Activated CD4-positive, alpha-beta memory T cell treated with anti-CD3 and anti-CD28 coated beads for 36 hours (primary cell): ENCODE measurements at regions of chr2 and their contacts with region 1.

Region 1: DNA sequence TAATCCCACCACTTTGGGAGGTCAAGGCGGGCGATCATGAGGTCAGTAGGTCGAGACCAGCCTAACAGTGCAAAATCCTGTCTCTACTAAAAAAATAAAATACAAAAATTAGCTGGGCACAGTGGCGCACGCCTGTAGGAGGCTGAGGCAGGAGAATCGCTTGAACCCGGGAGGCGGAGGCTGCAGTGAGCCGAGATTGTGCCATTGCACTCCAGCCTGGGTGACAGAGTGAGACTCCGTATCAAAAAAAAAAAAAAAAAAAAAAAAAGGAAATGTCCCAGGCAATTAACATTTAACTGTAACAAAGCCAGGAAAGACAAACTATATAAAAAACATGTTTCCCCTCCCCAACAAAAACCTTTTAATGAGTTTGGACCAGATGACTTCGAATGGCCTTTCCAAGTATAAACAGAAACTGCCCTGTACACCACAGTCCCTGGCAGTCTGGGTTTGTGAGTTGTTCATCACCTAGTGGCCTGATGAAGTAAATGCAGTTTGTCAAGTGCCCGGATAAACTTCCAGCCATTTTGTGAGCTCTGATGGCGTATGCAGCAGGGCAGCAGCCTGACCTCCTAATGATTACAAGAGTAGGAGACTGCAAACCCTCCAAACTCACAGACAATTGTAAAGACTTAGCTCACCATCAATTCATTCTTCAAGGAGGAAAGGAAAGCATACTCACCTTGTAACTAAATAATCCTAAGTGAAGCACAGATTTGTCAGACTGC is 16.6 kb upstream of the PCBP1 start:
- DNase-seq: peak; percentile 72
- H3K4me3 Mint-ChIP-seq: peak overlapping the region; percentile 35
- H3K27ac Mint-ChIP-seq: peak overlapping the region; percentile 98
- H3K4me1 Mint-ChIP-seq: peaks cover 46% of the 10 kb centered on the region
- H3K27me3 Mint-ChIP-seq: no peaks in the 10 kb centered on the region

Region 2: DNA sequence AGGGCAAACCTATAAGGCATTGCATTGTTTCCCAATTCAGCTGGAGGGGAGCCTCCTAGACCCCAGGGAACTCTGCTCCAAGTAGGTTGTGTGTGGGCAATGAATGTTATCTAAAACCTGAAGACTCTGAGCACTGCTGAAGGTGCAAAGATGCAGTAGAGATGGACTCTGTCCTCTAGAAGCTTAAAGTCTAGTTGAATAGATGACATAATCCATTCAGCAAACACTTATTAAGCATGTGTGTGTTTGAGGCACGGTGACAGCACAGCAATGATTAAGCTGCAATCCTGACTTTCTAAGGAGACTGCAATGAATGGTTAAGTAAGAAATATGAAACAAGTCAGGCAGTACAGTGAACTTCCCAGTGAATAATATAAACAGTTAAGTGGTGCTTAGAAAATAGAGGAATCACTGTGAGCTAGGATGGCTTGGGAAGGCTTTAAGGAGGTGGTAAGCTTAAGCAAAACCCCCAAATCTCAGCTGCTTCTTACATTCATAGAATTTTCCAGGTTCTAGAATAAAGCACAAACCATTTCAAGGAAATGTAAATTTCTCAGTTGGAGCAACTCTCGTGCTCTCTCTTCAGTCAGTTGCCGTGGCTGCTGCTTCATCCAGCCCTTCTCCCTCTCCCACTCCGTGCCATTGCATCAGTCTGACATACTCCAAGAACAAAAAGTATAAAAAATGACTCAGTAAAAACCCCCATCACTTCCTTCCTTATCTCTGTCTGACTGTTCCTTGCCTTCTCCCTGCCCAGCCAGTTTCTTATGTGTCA is 136.7 kb before region 1 on chr2:
- CTCF ChIA-PET with region 1: interaction called, 11 read pairs
- POLR2A ChIA-PET with region 1: interaction called, 22 read pairs
- intact Hi-C with region 1: loop called (anchors 1 kb)
- DNase-seq: peak; percentile 63
- H3K4me3 Mint-ChIP-seq: no peak overlapping the region
- H3K27ac Mint-ChIP-seq: peak overlapping the region; percentile 73
- H3K4me1 Mint-ChIP-seq: peaks cover 37% of the 10 kb centered on the region
- H3K27me3 Mint-ChIP-seq: no peaks in the 10 kb centered on the region

Region 3: GRCh38 chr2:70011786-70012185 is 58.9 kb before region 1 on chr2:
- CTCF ChIA-PET with region 1: interaction called, 3 read pairs
- POLR2A ChIA-PET with region 1: no interaction called
- intact Hi-C with region 1: loop called (anchors 2 kb)
- DNase-seq: no peak
- H3K4me3 Mint-ChIP-seq: no peak overlapping the region
- H3K27ac Mint-ChIP-seq: no peak overlapping the region
- H3K4me1 Mint-ChIP-seq: peaks cover 11% of the 10 kb centered on the region
- H3K27me3 Mint-ChIP-seq: no peaks in the 10 kb centered on the region

Region 4: DNA sequence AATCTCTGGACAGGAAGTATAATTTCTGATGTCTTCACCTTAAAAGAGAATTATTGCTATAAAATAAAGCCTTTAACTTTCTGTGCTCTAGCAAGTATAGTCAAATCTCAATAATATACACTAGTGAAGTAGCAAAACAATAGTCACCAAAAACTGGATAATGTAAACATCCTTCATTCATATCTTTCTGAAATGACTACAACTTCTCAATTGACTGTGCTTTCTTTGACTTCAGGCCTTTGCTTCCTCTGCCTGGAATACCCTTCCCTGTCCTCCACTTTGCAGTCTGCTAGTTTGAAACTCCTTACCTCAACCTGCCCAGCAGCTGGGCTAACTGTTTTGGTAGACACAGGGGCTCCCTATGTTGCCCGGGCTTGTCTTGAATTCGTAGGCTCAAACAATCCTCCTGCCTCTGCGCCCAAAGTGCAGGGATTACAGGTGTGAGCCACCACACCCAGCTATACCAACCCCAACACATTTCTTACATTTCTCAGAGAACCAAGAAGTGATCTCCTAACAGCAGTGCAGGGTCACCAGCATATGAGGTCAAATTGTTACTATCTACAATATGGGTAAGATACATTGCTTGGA is 10.0 kb after region 1 on chr2:
- CTCF ChIA-PET with region 1: interaction called, 78 read pairs
- POLR2A ChIA-PET with region 1: interaction called, 12 read pairs
- intact Hi-C with region 1: loop called (anchors 1 kb)
- DNase-seq: peak; percentile 35
- H3K4me3 Mint-ChIP-seq: peak overlapping the region; percentile 25
- H3K27ac Mint-ChIP-seq: peak overlapping the region; percentile 93
- H3K4me1 Mint-ChIP-seq: peaks cover 54% of the 10 kb centered on the region
- H3K27me3 Mint-ChIP-seq: no peaks in the 10 kb centered on the region

Region 5: DNA sequence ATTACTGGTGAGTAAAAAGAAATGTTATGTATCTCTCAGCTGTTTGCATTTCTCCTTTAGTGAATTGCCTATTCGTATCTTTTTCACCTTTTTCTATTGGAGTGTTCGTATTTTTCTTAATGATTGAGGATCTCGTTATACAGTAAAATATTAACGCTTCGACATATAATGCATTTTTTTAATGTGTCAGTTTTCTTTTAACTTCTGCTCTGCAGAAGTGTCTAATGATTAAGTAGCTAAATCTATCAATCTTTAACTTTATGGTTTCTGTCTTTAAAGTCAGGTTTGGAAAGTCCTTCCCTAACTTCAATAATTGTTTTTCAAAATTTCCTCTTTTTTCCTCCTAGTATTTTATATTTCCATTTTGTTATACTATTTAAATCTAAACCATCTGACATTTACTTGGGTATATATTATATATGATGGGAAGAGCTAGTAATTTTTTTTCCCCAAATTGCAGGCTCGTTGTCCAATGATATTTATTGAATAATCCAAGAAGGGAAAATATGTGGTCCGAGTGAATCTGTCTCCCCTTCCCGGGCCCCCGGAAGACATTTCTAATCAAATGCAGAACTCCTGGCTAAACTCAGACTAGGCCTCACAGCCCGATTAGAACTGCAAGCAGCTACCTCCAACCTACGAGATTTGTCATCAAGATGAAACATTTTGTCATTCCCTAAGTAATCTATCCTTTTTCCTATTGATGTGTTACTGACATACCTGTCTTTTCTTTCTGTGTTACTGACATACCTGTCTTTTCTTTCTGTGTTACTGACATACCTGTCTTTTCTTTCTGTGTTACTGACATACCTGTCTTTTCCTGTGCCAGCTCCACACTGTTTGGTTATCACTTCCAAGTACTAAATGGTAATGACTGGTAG is 33.8 kb after region 1 on chr2:
- CTCF ChIA-PET with region 1: interaction called, 7 read pairs
- POLR2A ChIA-PET with region 1: interaction called, 3 read pairs
- intact Hi-C with region 1: loop called (anchors 1 kb)
- DNase-seq: peak; percentile 71
- H3K4me3 Mint-ChIP-seq: peak overlapping the region; percentile 70
- H3K27ac Mint-ChIP-seq: peak overlapping the region; percentile 95
- H3K4me1 Mint-ChIP-seq: peaks cover 52% of the 10 kb centered on the region
- H3K27me3 Mint-ChIP-seq: no peaks in the 10 kb centered on the region

Region 6: DNA sequence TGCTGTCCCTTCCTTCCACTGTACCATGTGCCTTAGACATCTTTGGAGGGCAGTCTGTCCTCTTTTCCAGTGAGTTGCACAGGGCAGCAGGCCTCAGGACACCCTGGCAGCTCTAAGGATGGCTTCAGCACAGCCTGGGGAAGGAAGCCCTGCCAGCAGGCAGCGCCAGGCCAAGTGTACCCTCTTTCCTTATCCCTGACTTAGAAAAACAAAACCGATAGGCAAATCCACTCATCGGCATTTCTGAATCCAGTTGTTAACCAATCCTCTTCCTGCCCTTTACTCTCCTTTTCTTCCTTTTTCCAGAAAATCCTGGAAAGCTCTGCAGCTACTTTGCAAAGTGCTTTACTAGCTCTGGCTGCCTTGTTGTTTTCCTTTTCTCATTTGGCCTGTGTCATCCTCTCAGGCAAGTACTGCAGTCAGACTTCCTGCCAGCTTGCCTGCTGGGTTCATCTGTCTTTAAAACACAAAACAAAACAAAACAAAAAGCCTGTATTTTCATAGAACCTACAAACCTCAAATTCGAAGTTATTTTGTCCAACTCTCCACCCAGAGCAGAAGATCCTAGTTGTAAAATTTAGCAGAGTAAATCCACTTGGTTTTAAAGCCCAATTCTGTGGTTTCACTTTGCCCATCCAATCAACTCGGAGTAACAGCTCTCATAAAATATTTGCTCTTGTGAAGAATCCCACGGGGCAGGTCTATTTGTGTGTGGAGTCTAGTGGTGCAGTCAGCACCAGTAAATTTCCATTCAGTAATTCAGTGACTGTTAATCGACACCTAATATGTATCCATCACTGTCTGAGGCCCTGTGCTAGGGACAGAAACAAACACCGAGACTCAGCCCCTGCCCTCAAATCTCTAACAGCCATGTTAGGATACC is 61.8 kb after region 1 on chr2:
- CTCF ChIA-PET with region 1: interaction called, 5 read pairs
- POLR2A ChIA-PET with region 1: interaction called, 10 read pairs
- intact Hi-C with region 1: loop called (anchors 1 kb)
- DNase-seq: peak; percentile 53
- H3K4me3 Mint-ChIP-seq: peak overlapping the region; percentile 94
- H3K27ac Mint-ChIP-seq: peak overlapping the region; percentile 100
- H3K4me1 Mint-ChIP-seq: peaks cover 75% of the 10 kb centered on the region
- H3K27me3 Mint-ChIP-seq: no peaks in the 10 kb centered on the region

Region 7: GRCh38 chr2:70190418-70191243 is 119.9 kb after region 1 on chr2 and contains the start of gene C2orf42:
- CTCF ChIA-PET with region 1: interaction called, 4 read pairs
- POLR2A ChIA-PET with region 1: interaction called, 3 read pairs
- intact Hi-C with region 1: loop called (anchors 1 kb)
- DNase-seq: peak; percentile 98
- H3K4me3 Mint-ChIP-seq: peak within 1 kb of the TSS; percentile 97
- H3K27ac Mint-ChIP-seq: peak within 1 kb of the TSS; percentile 99
- H3K4me1 Mint-ChIP-seq: peaks cover 20% of the 10 kb centered on the region
- H3K27me3 Mint-ChIP-seq: peaks cover 1% of the 10 kb centered on the region
- total RNA-seq, gene C2orf42: 23.5 to 23.9 TPM